ENCODE measurements at regions of chr6 and their contacts with region 1.

Region 1: DNA sequence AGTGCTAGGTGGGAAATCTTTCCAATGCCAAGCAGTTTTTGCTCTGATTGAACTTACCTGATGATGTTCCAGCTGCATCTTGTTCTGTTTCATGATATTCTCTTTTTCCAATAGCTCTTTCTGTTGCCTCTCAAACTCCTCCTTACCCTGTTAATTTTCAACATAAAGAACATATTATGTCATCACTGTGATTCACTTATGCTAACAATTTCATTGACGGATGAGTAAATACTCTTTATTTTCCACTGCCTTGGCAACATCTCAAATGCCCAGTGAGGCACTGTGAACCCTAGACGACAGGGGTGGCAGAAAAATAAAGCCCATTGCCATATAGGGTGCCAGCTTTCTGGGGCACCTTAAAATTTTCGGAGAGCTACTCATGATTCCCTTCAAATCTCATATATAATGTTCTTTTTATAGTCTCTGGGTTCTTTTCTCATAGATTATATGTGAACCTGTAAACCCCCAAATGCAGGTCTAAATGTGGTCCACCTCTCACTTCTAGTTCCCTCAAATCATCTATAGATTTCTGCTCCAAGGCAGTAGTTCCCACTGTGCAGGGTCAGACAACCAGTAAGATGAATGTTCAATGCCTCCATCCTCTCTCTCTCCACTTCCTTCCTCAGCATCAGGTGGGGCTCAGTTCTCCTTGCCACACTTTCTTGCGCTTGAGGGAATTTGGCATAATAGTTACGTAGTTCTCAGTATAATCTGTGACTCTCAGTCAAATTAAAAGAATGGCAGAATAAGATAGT is 44.1 kb downstream of the NEDD9 start:
- DNase-seq: no peak
- H3K4me3 ChIP-seq: no peak overlapping the region
- H3K27ac ChIP-seq: no peak overlapping the region
- H3K4me1 ChIP-seq: peaks cover 0 to 3% (median under 1%) of the 10 kb centered on the region in 4 experiments
- H3K27me3 ChIP-seq: no peaks in the 10 kb centered on the region

Region 2: GRCh38 chr6:11172501-11173332 is 15.6 kb before region 1 on chr6:
- CTCF ChIA-PET with region 1: interaction called, 12 read pairs
- POLR2A ChIA-PET with region 1: interaction called, 3 read pairs
- DNase-seq: peak; percentile 56 to 76 (median 71)
- H3K4me3 ChIP-seq: peak overlapping the region in 1 of 7 experiments; percentile 36
- H3K27ac ChIP-seq: no peak overlapping the region
- H3K4me1 ChIP-seq: peaks cover 0 to 3% (median 0%) of the 10 kb centered on the region in 4 experiments
- H3K27me3 ChIP-seq: no peaks in the 10 kb centered on the region